ENCODE measurements at regions of chr20 and their contacts with region 1.

Region 1: GRCh38 chr20:46057856-46058598 is 29.0 kb downstream of the SLC12A5 start:
- DNase-seq: peak; percentile 56
- H3K4me3 ChIP-seq: peak overlapping the region in 2 of 3 experiments; percentile 3 to 26
- H3K27ac ChIP-seq: no peak overlapping the region
- H3K4me1 ChIP-seq: peaks cover 27% of the 10 kb centered on the region
- H3K27me3 ChIP-seq: peaks cover 2 to 23% of the 10 kb centered on the region in 2 experiments
- CTCF ChIP-seq: peak in 1 of 2 donors; percentile 30
- POLR2A ChIP-seq: no peak

Region 2: GRCh38 chr20:45987108-45987780 is 70.8 kb before region 1 on chr20:
- CTCF ChIA-PET with region 1: interaction called, 20 read pairs
- POLR2A ChIA-PET with region 1: no interaction called
- dilution Hi-C with region 1: no loop called
- intact Hi-C with region 1: no loop called
- DNase-seq: peak; percentile 64
- H3K4me3 ChIP-seq: no peak overlapping the region
- H3K27ac ChIP-seq: no peak overlapping the region
- H3K4me1 ChIP-seq: no peaks in the 10 kb centered on the region
- H3K27me3 ChIP-seq: peaks cover 4 to 8% of the 10 kb centered on the region in 2 experiments
- CTCF ChIP-seq: peak; percentile 83 to 94
- POLR2A ChIP-seq: no peak

Region 3: GRCh38 chr20:46022411-46023147 is 35.4 kb before region 1 on chr20:
- CTCF ChIA-PET with region 1: interaction called, 27 read pairs
- POLR2A ChIA-PET with region 1: no interaction called
- dilution Hi-C with region 1: no loop called
- intact Hi-C with region 1: loop called (anchors 5 kb)
- DNase-seq: no peak
- H3K4me3 ChIP-seq: no peak overlapping the region
- H3K27ac ChIP-seq: no peak overlapping the region
- H3K4me1 ChIP-seq: no peaks in the 10 kb centered on the region
- H3K27me3 ChIP-seq: peaks cover 10 to 22% of the 10 kb centered on the region in 2 experiments
- CTCF ChIP-seq: peak; percentile 53 to 77
- POLR2A ChIP-seq: no peak

Region 4: DNA sequence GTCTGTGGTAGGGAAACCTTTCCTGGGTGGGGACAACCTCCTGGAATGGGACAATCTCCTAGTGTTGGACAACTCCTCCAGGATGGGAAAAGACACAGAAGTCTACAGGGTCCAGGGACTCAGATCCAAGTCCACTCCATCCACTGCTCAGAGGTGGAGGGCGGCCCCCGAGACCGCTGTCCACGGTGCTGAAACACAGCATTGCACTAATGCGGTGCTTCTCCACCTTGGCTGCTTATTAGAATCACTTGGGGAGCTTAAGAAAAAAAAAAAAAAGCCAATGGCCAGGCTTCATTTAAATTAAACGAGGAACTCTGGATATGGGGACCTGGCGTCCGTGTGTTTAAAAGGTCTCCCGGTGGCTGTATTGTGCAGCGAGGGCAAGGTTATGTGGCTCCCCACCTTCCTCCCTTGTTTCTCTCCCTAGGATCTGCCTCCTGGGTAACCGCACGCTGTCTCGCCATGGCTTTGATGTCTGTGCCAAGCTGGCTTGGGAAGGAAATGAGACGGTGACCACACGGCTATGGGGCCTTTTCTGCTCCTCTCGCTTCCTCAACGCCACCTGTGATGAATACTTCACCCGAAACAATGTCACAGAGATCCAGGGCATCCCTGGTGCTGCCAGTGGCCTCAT is 17.0 kb before region 1 on chr20:
- CTCF ChIA-PET with region 1: interaction called, 8 read pairs
- POLR2A ChIA-PET with region 1: no interaction called
- dilution Hi-C with region 1: no loop called
- intact Hi-C with region 1: loop called (anchors 1 kb)
- DNase-seq: peak; percentile 43
- H3K4me3 ChIP-seq: no peak overlapping the region
- H3K27ac ChIP-seq: no peak overlapping the region
- H3K4me1 ChIP-seq: no peaks in the 10 kb centered on the region
- H3K27me3 ChIP-seq: no peaks in the 10 kb centered on the region
- CTCF ChIP-seq: no peak
- POLR2A ChIP-seq: no peak

Region 5: GRCh38 chr20:46089417-46090388 is 31.7 kb after region 1 on chr20 and contains the start of gene NCOA5:
- CTCF ChIA-PET with region 1: interaction called, 21 read pairs
- POLR2A ChIA-PET with region 1: no interaction called
- dilution Hi-C with region 1: no loop called
- intact Hi-C with region 1: loop called (anchors 1 kb)
- DNase-seq: peak; percentile 94
- H3K4me3 ChIP-seq: peak within 1 kb of the TSS; percentile 70 to 80 (median 77)
- H3K27ac ChIP-seq: peak within 1 kb of the TSS; percentile 83
- H3K4me1 ChIP-seq: peaks cover 26% of the 10 kb centered on the region
- H3K27me3 ChIP-seq: peaks cover 0 to 2% of the 10 kb centered on the region in 2 experiments
- CTCF ChIP-seq: peak in 1 of 2 donors; percentile 15
- POLR2A ChIP-seq: peak; percentile 85
- total RNA-seq, gene NCOA5: 34.2 and 39.5 TPM in 2 replicates

Measured in endothelial cell of umbilical vein (primary cell).